ENCODE measurements at regions of chr4 and their contacts with region 1.

Region 1: DNA sequence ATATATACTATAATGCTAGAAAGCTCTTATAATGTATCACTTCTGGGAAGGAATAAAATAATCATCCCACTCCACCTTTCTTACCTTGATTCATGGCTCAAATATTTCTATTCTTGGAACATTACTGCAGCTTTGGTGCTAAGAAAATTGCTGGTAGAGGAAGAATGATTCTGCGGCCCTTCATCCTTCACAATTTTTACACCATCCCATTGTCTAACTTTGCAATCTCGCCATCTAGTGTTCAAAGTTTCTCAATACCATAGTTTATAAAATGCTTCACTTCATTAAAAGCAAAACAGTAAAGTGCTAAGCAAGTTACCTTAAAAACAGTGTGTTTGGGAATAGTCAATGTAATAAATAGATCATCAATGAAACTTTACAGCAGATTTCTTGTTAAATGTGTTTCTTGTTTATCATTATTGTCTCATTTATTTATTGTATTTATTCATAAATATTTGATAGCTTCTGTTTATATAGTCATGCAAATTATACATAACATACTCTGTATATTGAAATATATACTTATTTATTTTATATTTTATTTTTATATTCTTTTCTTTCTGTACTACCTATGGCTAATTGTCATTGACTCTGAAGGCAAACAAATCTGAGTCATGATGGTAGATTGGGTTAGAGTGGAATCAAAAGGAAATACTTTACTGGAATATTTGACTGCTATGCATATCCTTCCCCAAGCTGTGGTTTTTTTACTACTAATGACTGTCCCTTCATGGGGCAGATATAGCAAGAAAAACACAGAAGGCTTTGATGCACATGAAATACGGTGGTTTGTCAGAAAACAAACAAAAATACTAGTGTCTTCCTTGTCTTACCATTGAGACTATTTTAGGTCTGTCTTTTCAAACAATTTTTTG is 390.7 kb downstream of the MAPK10 start:
- DNase-seq: no peak
- H3K4me3 ChIP-seq: no peak overlapping the region
- H3K27ac ChIP-seq: no peak overlapping the region
- H3K4me1 ChIP-seq: peaks cover 3 to 21% (median 11%) of the 10 kb centered on the region in 4 donors
- H3K27me3 ChIP-seq: no peaks in the 10 kb centered on the region
- CTCF ChIP-seq: peak; percentile 58 to 63 (median 60)
- EP300 ChIP-seq: no peak
- POLR2A ChIP-seq: no peak

Region 2: DNA sequence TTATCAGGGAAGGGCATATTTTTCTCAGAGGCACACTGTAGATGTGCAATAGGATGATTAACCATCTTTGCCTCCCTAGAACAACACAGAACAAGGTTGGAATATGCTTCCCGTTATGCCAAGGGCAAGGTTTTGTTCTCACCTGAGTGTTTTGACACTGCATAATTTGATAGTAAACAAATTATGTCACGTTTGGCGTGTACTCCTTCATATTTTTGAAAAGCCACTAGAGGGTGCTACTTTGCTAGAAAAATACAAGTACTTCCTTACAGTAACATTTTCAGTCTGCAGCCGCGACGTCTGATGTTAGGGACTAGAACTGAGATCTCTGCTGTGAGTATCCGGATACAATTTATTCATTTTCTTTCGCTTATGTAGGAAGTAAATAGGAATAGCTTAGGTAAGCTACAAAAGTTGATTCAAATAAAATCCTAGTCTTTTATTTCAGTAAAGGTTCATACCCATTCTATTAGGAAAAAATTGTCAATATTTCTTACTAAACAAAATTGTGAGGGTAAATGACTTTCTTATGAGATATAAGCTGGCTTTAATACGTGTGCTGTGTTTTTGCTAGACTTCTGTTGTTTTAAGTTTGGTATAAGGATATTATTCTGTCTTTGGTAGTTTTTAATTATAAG is 821.6 kb before region 1 on chr4:
- intact Hi-C with region 1: loop called (anchors 10 kb)
- DNase-seq: no peak
- H3K4me3 ChIP-seq: peak overlapping the region in 1 of 4 donors; percentile 20
- H3K27ac ChIP-seq: no peak overlapping the region
- H3K4me1 ChIP-seq: peaks cover 0 to 8% (median 5%) of the 10 kb centered on the region in 4 donors
- H3K27me3 ChIP-seq: no peaks in the 10 kb centered on the region
- CTCF ChIP-seq: peak; percentile 53 to 64 (median 57)
- EP300 ChIP-seq: no peak
- POLR2A ChIP-seq: no peak

Region 3: GRCh38 chr4:85756938-85757337 is 212.2 kb before region 1 on chr4:
- intact Hi-C with region 1: loop called (anchors 5 kb)
- DNase-seq: no peak
- H3K4me3 ChIP-seq: no peak overlapping the region
- H3K27ac ChIP-seq: no peak overlapping the region
- H3K4me1 ChIP-seq: peaks cover 14 to 20% (median 17%) of the 10 kb centered on the region in 4 donors
- H3K27me3 ChIP-seq: no peaks in the 10 kb centered on the region
- CTCF ChIP-seq: peak; percentile 28 to 49 (median 46)
- EP300 ChIP-seq: no peak
- POLR2A ChIP-seq: no peak

Region 4: DNA sequence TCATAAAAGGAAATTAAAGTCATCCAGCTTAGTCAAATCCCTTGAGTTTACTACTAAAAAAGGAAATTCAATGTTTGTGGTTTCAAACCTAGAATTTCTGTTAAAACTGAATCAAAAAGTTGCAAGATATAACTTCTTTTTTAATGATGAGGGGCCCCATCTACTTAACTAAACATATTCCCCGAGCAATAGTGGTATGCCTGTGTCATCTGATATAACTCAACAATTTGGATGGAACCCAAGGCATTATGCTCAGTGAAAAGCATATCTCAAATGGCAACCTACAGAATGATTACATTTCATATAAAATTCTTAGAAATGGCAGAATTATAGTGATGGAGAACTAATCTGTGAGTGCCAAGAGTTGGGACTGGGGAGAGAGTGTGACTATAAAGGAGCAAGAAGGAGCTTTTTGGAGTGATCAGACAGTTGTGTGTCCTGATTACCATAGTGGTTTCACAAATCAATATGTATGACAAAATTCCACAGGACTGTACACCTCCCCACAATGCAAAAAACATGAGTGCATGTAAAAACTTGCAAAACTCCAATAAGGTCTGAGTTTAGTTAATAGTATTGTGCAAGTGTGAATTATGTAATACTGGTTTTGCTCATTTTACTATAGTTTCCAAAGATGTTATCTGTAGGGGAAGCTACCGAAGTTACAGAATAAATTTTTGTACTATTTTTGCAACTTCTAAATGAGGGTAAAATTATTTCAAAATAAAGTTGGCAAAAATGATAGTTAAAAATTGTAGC is 171.0 kb before region 1 on chr4:
- intact Hi-C with region 1: loop called (anchors 2 kb)
- DNase-seq: no peak
- H3K4me3 ChIP-seq: no peak overlapping the region
- H3K27ac ChIP-seq: no peak overlapping the region
- H3K4me1 ChIP-seq: peaks cover 6 to 43% (median 21%) of the 10 kb centered on the region in 4 donors
- H3K27me3 ChIP-seq: no peaks in the 10 kb centered on the region
- CTCF ChIP-seq: no peak
- EP300 ChIP-seq: no peak
- POLR2A ChIP-seq: no peak

Measured in esophagus muscularis mucosa (tissue), 4 donors.